ENCODE measurements at regions of chr1 and their contacts with region 1.

Region 1: DNA sequence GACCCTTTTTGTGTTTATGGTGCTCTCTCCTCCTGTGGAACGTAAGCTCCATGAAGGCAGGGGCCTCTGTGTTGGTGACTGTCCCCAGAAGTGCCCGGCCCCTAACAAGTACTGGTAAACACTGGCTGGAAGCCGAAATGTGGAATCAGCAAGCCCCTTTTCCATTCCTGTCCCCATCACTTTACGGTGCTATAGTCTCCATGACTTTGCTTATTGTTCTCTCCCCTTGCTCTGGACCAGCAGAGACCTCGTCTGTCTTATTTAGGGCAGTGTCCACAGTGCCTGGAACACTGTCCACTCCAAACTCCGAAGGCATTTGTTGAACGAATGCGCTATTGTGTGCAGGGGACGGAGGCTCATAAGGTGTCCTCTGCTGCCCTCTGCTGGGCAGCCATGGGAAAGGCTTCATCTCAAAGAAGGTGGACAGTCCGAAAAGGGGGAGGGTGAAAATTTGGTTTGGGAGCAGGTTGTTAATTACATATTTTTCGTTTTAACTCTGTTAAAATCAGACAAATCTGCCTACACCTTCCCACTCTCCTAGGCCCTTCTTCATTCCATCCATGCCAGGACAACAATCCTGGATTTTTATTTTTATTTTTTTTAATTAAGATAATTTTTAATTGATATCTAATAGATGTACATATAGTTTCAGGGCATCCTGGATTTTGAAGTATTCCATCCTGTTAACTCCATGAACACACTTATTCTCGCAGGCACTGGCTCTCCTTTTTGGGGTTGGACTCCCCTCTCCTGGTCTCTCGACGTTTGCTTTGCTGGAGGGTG is 115.6 kb downstream of the PGBD5 start:
- DNase-seq: peak; percentile 74
- H3K4me3 ChIP-seq: no peak overlapping the region
- H3K27ac ChIP-seq: no peak overlapping the region
- H3K4me1 ChIP-seq: peaks cover 4% of the 10 kb centered on the region
- CTCF ChIP-seq: peak; percentile 96

Region 2: GRCh38 chr1:229258031-229258756 is 1052.4 kb before region 1 on chr1:
- CTCF ChIA-PET with region 1: no interaction called
- POLR2A ChIA-PET with region 1: no interaction called
- intact Hi-C with region 1: loop called (anchors 5 kb)
- DNase-seq: peak; percentile 76
- H3K4me3 ChIP-seq: no peak overlapping the region
- H3K27ac ChIP-seq: no peak overlapping the region
- H3K4me1 ChIP-seq: peaks cover 11% of the 10 kb centered on the region
- CTCF ChIP-seq: peak; percentile 97

Region 3: DNA sequence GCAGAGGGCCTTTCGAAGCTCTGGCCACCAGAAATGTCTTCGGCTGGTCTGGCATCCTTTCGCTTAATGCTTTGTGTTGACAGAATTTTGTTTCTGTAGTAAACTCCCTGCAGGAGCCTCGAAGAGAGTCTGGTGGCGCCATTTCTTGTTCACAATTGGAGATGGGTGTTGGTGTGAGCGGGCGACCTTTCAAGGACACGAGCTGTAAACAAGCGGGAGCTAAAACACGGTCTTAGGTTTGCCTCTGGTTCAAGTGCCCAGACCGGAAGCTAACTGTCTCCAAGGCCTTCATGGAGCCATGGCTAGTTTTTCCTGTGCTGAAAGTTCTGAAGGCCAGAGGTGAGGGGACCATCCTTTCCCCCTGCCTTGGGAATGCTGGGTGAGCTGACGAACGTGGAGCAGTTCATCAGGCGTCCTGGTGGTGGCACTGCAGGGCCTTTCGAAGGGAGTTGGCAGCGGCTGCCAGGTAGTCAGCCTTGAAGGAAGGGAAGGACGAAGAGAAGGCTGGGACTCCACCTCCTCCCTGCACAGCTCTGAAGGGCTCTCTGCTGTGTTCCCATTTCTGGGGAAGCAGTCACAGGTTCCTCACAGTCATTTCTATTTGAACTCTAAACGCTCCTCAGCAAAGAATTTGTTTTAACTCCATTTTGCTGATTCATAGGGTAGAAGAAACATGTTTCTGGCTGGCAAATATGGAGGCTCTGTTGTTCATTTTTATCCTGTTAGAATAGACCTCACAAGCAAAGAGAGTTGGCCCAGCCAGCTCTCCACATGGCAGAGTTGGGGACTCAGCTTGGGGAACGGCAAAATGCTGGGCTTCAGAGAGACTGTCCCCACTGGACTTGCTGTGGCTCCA is 649.3 kb before region 1 on chr1:
- CTCF ChIA-PET with region 1: no interaction called
- POLR2A ChIA-PET with region 1: interaction called, 3 read pairs
- intact Hi-C with region 1: loop called (anchors 1 kb)
- DNase-seq: peak; percentile 79
- H3K4me3 ChIP-seq: no peak overlapping the region
- H3K27ac ChIP-seq: no peak overlapping the region
- H3K4me1 ChIP-seq: peaks cover 29% of the 10 kb centered on the region
- CTCF ChIP-seq: peak; percentile 94

Region 4: GRCh38 chr1:229714964-229715603 is 595.5 kb before region 1 on chr1:
- CTCF ChIA-PET with region 1: no interaction called
- POLR2A ChIA-PET with region 1: no interaction called
- intact Hi-C with region 1: loop called (anchors 2 kb)
- DNase-seq: peak; percentile 62
- H3K4me3 ChIP-seq: no peak overlapping the region
- H3K27ac ChIP-seq: no peak overlapping the region
- H3K4me1 ChIP-seq: no peaks in the 10 kb centered on the region
- CTCF ChIP-seq: peak; percentile 90

Region 5: GRCh38 chr1:229856009-229856650 is 454.4 kb before region 1 on chr1:
- CTCF ChIA-PET with region 1: no interaction called
- POLR2A ChIA-PET with region 1: no interaction called
- intact Hi-C with region 1: loop called (anchors 10 kb)
- DNase-seq: peak; percentile 87
- H3K4me3 ChIP-seq: peak overlapping the region; percentile 56
- H3K27ac ChIP-seq: peak overlapping the region; percentile 65
- H3K4me1 ChIP-seq: peaks cover 15% of the 10 kb centered on the region
- CTCF ChIP-seq: no peak

Region 6: DNA sequence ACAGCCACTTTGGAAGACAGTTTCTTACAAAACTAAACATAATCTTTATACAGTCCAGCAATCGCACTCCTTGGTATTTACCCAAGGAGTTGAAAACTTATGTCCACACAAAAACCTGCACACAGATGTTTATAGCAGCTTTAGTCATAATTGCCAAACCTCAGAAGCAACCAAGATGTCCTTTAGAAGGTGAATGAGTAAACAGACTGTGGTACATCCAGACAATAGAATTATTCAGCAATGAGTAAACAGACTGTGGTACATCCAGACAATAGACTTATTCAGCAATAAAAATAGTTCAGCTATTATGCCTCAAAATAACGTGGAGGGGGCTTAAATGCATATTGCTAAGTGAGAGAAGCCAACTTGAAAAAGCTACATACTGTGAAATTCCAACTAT is 330.6 kb before region 1 on chr1:
- CTCF ChIA-PET with region 1: no interaction called
- POLR2A ChIA-PET with region 1: no interaction called
- intact Hi-C with region 1: loop called (anchors 10 kb)
- DNase-seq: no peak
- H3K4me3 ChIP-seq: no peak overlapping the region
- H3K27ac ChIP-seq: no peak overlapping the region
- H3K4me1 ChIP-seq: no peaks in the 10 kb centered on the region
- CTCF ChIP-seq: no peak

Region 7: DNA sequence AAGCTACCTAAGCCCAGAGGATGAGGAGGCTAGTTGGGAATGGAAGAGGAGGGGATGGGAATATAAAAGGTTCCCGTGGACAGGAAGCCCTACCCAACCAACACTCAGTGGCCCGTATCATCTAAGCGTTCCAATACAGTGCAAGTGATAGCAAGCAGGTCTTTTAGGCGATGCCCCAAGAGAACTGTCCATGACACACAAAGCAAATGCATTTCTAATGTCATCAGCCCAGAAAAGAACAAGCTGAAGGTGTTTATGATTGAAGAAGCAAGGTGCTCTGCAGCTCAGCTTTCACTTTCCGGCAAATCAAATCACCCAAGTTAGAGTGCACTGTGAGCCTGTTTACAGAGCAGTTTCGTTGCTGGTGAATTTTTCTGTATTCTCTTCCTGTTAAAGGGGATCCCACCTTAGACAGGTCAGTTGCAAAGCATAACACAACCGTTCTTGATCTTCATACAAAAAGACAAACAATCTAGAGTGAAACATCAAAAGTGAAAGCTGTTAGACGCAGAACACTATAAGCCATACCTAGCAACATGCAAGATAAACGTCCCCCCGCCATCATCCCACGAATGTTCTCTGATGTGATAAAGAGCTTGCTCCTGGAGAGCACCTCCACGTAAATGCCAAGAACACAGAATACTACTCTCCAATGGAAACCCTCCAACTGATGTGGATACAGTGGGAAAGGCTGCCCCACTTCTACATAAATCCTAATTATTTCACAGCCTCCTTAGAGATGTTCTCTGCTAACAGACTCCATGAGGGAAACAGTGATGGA is 61.5 kb after region 1 on chr1:
- CTCF ChIA-PET with region 1: no interaction called
- POLR2A ChIA-PET with region 1: no interaction called
- intact Hi-C with region 1: no loop called
- DNase-seq: no peak
- H3K4me3 ChIP-seq: no peak overlapping the region
- H3K27ac ChIP-seq: no peak overlapping the region
- H3K4me1 ChIP-seq: no peaks in the 10 kb centered on the region
- CTCF ChIP-seq: no peak